A673 (cell line): ENCODE measurements at regions of chr3 and their contacts with region 1.

Region 1: GRCh38 chr3:48938689-48939088 is 20.0 kb downstream of the ARIH2 start:
- DNase-seq: no peak
- H3K4me3 ChIP-seq: no peak overlapping the region
- H3K27ac ChIP-seq: no peak overlapping the region
- H3K4me1 ChIP-seq: no peaks in the 10 kb centered on the region
- H3K27me3 ChIP-seq: no peaks in the 10 kb centered on the region
- CTCF ChIP-seq: no peak

Region 2: DNA sequence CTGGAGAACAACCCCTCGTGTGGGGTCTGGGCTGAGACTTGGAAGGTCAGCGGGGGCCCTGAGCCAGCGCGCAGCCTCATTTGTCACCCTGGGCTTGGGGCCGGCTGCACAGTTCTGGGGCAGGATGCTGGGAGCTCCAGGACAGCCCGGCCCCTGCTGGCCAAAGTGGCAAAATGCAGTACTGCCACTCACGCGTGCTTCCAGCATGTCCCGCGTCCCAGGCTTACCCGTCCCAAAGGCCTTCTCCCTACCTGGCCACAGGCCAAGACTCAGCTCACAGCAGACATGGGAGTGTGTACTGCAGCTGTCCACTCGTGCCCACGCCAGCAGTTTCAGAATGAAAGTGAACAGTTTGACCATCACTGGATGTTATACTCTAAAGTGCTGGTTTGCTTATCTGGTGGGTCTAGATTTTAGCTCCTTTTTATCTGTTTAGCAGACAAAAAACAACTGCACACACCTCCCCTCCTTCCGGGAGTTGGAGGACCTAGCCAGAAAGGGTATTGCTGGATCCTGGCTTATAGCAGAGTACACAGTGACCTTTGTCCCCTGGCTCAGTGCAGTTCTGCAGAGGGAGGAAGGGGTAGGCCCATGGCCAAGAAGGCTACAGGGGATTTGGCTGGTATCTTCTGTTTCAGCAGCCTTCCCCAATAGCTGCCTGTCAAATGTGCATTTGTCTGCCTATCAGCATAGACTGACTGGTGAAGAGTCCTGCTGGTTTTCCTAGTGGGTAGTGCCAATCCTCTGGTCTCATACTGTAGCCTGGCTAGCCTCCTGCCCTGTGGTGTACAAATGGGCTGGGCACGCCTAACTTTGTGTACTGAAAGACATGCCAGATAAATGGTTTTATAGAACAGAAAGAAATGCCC is 198.5 kb before region 1 on chr3:
- CTCF ChIA-PET with region 1: interaction called, 10 read pairs
- POLR2A ChIA-PET with region 1: no interaction called
- intact Hi-C with region 1: no loop called
- DNase-seq: peak; percentile 63
- H3K4me3 ChIP-seq: no peak overlapping the region
- H3K27ac ChIP-seq: no peak overlapping the region
- H3K4me1 ChIP-seq: no peaks in the 10 kb centered on the region
- H3K27me3 ChIP-seq: no peaks in the 10 kb centered on the region
- CTCF ChIP-seq: peak; percentile 61

Region 3: GRCh38 chr3:49171119-49171774 is 232.6 kb after region 1 on chr3 and contains the start of gene KLHDC8B:
- CTCF ChIA-PET with region 1: no interaction called
- POLR2A ChIA-PET with region 1: no interaction called
- intact Hi-C with region 1: no loop called
- DNase-seq: peak; percentile 62
- H3K4me3 ChIP-seq: peak within 1 kb of the TSS; percentile 58
- H3K27ac ChIP-seq: peak within 1 kb of the TSS; percentile 63
- H3K4me1 ChIP-seq: no peaks in the 10 kb centered on the region
- H3K27me3 ChIP-seq: no peaks in the 10 kb centered on the region
- CTCF ChIP-seq: peak; percentile 74
- total RNA-seq, gene KLHDC8B: 5.1 and 6.9 TPM in 2 replicates

Region 4: DNA sequence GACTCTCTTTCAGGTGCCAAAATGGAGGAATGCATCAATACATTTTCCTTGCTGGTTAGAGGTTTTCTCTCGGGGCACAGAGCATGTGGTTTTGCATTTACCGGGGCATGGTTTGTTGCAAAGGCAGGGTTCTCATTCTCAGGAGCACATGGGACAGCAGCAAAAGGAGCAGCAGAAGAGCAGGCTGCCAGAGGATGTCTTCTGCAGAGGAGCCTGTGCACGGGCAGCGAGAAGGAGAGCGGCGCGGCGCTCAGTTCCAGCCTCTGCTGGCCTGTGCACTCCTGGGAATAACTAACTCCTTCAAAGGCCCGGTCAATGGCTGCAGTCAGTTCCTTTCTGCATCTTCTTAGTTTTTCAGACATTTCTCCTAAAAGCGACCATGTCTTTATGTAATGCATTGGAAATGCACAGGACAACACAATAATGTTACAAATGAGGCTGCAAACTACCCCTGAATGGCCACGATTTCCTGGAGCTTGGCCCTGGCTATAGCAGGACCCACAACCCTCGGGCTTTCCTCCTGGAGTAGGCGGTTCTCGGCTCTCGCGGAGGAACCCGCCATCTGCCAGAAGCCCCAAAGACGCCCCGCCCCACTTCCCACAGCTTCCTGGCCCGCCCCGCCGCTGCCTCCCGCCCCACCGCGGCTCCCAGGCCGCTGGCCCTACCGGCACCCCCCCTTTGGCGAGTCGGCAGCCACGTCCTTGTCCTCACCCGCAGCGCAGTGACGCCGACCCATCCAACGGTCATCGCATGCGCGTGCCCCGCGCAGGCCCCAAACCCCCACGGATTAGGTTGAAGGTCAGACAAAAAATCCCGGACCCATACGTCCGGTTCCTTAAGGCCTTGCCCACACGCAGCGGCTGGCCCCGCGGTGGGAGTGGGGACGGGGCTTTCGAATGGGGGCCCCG is 338.0 kb after region 1 on chr3 and contains the start of gene C3orf62:
- CTCF ChIA-PET with region 1: no interaction called
- POLR2A ChIA-PET with region 1: no interaction called
- intact Hi-C with region 1: no loop called
- DNase-seq: peak; percentile 74
- H3K4me3 ChIP-seq: peak within 1 kb of the TSS; percentile 49
- H3K27ac ChIP-seq: peak within 1 kb of the TSS; percentile 68
- H3K4me1 ChIP-seq: peaks cover 5% of the 10 kb centered on the region
- H3K27me3 ChIP-seq: no peaks in the 10 kb centered on the region
- CTCF ChIP-seq: no peak
- total RNA-seq, gene C3orf62: 1.8 and 2.0 TPM in 2 replicates

Region 5: GRCh38 chr3:49387721-49388120 is 449.0 kb after region 1 on chr3:
- CTCF ChIA-PET with region 1: no interaction called
- POLR2A ChIA-PET with region 1: no interaction called
- intact Hi-C with region 1: no loop called
- DNase-seq: no peak
- H3K4me3 ChIP-seq: no peak overlapping the region
- H3K27ac ChIP-seq: no peak overlapping the region
- H3K4me1 ChIP-seq: no peaks in the 10 kb centered on the region
- H3K27me3 ChIP-seq: no peaks in the 10 kb centered on the region
- CTCF ChIP-seq: no peak